PC-9 (cell line): ENCODE measurements at regions of chr2 and their contacts with region 1.

Region 1: GRCh38 chr2:38602732-38603401 is at the start of gene HNRNPLL:
- DNase-seq: peak; percentile 92 to 99
- H3K4me3 ChIP-seq: peak within 1 kb of the TSS; percentile 69
- H3K27ac ChIP-seq: peak within 1 kb of the TSS; percentile 54
- H3K4me1 ChIP-seq: peaks cover 34% of the 10 kb centered on the region
- H3K27me3 ChIP-seq: no peaks in the 10 kb centered on the region
- CTCF ChIP-seq: no peak
- total RNA-seq, gene HNRNPLL: 38.1 and 39.5 TPM in 2 replicates

Region 2: DNA sequence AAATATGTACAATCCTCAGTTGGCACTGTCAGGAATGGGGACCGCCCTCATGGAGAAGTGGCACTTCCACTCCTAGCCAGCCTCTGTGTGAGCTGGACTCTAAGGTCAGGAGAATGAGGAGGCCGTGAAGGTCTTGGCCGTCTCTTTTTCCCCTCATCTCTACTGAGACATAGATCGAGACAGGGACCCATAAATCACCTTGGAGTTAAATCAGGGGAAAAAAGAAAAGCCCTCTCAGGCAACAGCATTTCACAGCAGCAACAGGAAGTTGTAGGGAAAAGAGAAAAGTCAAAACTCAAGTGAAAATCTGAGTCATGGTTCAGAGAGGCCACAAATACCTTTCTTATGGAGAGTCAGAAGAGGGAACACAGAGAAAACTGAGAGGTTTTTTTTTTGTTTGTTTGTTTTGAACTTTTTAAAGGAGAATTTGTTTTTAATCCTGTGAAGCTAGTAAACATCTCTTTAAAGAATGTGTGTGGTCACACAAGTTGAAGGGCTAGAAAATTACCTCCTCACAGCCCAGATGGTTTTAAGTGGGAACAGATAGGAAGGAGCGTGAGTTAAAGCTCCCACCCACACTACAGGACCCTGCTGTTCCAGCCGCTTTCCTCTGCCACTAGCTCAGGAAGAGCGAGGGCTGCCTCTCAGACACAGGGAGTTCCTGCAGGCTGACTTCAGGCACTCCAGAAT is 496.3 kb before region 1 on chr2:
- CTCF ChIA-PET with region 1: no interaction called
- POLR2A ChIA-PET with region 1: no interaction called
- intact Hi-C with region 1: loop called (anchors 5 kb)
- DNase-seq: peak; percentile 19 to 93
- H3K4me3 ChIP-seq: no peak overlapping the region
- H3K27ac ChIP-seq: peak overlapping the region; percentile 96
- H3K4me1 ChIP-seq: peaks cover 23% of the 10 kb centered on the region
- H3K27me3 ChIP-seq: no peaks in the 10 kb centered on the region
- CTCF ChIP-seq: no peak

Region 3: GRCh38 chr2:38485734-38486133 is 117.1 kb before region 1 on chr2:
- CTCF ChIA-PET with region 1: no interaction called
- POLR2A ChIA-PET with region 1: no interaction called
- intact Hi-C with region 1: no loop called
- DNase-seq: no peak
- H3K4me3 ChIP-seq: no peak overlapping the region
- H3K27ac ChIP-seq: no peak overlapping the region
- H3K4me1 ChIP-seq: no peaks in the 10 kb centered on the region
- H3K27me3 ChIP-seq: no peaks in the 10 kb centered on the region
- CTCF ChIP-seq: no peak

Region 4: DNA sequence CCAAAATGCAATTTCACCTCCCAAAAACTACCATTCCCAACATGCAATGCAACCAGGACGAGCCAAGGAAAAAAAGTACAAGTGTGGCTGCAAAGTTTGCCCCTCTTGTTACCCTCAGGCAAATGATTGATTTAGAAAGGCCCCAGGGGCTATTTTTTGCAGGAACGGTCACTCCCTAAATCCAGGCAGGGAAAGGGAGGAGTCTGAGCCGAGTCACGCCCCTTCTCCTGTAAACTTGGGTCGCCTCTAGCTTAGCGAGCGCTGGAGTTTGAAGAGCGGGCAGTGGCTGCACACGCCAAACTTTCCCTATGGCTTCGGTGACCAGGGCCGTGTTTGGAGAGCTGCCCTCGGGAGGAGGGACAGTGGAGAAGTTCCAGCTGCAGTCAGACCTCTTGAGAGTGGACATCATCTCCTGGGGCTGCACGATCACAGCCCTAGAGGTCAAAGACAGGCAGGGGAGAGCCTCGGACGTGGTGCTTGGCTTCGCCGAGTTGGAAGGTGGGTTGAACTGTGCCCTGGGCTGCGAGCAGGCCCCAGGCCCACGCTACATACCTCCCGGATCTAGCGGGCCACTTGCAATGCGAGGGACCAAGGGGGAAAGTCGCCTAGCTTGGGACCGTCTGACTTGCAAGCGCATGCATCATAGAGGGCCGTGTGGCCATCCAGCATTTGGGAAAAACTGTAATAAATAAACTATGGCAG is 63.1 kb after region 1 on chr2 and contains the start of gene GALM:
- CTCF ChIA-PET with region 1: no interaction called
- POLR2A ChIA-PET with region 1: interaction called, 3 read pairs
- intact Hi-C with region 1: loop called (anchors 1 kb)
- DNase-seq: peak; percentile 85 to 86
- H3K4me3 ChIP-seq: peak within 1 kb of the TSS; percentile 67
- H3K27ac ChIP-seq: peak within 1 kb of the TSS; percentile 51
- H3K4me1 ChIP-seq: peaks cover 12% of the 10 kb centered on the region; the same call in 1 of the 2 replicates
- H3K27me3 ChIP-seq: no peaks in the 10 kb centered on the region
- CTCF ChIP-seq: no peak
- total RNA-seq, gene GALM: 26.3 and 27.7 TPM in 2 replicates

Region 5: DNA sequence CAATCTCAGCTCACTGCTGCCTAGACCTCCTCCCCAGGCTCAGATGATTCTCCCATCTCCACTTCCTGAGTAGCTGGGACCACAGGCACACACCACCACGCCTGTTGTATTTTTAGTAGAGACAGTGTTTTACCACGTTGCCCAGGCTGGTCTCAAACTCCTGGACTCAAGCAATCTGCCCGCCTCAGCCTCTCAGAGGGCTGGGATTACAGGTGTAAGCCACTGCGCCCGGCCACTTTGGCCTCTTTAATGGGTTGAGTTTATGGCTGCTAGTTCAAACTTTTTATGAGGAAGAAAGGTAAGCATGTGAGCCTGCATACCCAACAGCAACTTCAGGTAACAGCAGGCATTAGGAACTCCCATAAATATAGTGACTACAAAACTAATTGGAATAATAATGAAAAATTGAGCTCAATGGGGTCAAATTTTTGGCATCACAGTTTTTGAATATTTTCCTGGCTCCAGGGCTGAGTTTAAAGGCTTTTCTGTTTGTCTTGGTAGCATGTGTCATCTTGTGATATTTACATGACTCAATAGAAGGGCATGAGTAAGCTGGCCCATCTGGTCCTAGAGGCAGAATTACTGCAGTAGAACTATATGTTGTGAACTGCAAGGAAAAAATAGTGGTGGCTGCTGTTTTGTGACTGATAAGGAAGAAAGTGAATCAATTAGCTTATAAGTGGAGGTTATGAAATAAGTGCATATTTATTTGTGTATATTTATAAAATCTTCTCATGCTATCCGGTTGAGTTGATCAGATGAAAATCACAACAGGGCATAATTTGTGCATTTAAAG is 87.8 kb after region 1 on chr2:
- CTCF ChIA-PET with region 1: interaction called, 10 read pairs
- POLR2A ChIA-PET with region 1: interaction called, 11 read pairs
- intact Hi-C with region 1: no loop called
- DNase-seq: peak; percentile 52 to 99
- H3K4me3 ChIP-seq: no peak overlapping the region
- H3K27ac ChIP-seq: peak overlapping the region; percentile 87
- H3K4me1 ChIP-seq: peaks cover 55% of the 10 kb centered on the region
- H3K27me3 ChIP-seq: no peaks in the 10 kb centered on the region
- CTCF ChIP-seq: no peak